ENCODE measurements at regions of chr10 and their contacts with region 1.

Region 1: DNA sequence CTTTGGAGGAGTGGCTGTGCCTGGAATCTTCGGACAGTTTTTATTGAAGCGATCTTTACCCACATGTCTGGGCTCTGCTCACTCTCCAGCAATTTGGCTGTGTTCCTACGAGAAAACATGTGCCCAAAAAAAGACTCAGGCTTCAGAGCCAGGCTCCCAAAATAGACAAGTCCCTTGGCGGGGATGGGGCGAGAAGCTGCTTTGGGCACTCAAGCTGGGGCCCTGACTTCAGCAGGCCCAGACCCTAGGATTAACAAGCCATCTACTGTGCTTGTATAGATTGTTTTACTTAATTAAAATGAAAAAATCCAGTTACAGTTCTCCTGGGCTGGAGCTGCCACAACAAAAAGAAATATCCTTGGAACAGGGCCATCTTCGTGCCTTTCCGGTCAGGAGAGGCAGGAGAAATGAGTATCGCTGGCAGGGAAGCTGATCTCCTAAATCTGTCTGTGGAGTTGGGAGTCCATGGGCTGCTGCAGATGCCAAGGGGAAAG is 51.4 kb upstream of the PDCD4 start:
- DNase-seq: no peak
- ATAC-seq: no peak
- H3K4me3 ChIP-seq: no peak overlapping the region
- H3K27ac ChIP-seq: no peak overlapping the region
- H3K4me1 ChIP-seq: peaks cover 12% of the 10 kb centered on the region
- H3K27me3 ChIP-seq: no peaks in the 10 kb centered on the region
- CTCF ChIP-seq: no peak

Region 2: DNA sequence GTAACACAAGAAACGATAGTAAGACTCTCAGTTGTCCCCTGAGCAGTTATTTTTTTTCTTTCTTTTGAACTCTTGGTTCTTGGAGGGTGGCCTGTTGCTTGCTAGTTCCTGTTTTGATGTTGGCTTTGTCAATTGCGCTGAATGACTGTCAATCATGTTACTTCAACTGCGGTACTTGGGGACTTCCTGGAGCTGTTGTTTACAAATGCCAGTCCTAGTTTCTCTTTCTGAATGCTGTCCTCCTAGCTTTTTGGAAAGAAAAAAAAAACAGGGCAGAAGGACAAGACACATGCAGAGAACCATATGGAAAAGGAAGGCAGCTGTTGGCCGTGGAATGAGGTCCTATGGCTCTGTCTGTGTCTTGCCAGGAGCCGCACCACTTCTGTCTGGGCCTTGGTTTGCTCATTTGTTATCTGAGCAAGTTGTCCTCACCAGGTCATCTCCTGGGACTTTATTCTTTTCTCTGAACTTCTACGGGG is 44.3 kb after region 1 on chr10:
- CTCF ChIA-PET with region 1: no interaction called
- POLR2A ChIA-PET with region 1: no interaction called
- intact Hi-C with region 1: loop called (anchors 5 kb)
- DNase-seq: no peak
- ATAC-seq: no peak
- H3K4me3 ChIP-seq: no peak overlapping the region
- H3K27ac ChIP-seq: peak overlapping the region; percentile 74
- H3K4me1 ChIP-seq: peaks cover 20% of the 10 kb centered on the region
- H3K27me3 ChIP-seq: no peaks in the 10 kb centered on the region
- CTCF ChIP-seq: no peak

Measured in PC-3 (cell line).